CD8-positive, alpha-beta T cell (primary cell): ENCODE measurements at regions of chr9 and their contacts with region 1.

Region 1: GRCh38 chr9:71716138-71716909 is 52.0 kb downstream of the CEMIP2 start:
- DNase-seq: no peak
- ATAC-seq: no peak
- H3K4me3 ChIP-seq: no peak overlapping the region
- H3K4me3 Mint-ChIP-seq: no peak overlapping the region
- H3K27ac ChIP-seq: no peak overlapping the region
- H3K27ac Mint-ChIP-seq: no peak overlapping the region
- H3K4me1 ChIP-seq: no peaks in the 10 kb centered on the region
- H3K4me1 Mint-ChIP-seq: peaks cover 10% of the 10 kb centered on the region
- H3K27me3 ChIP-seq: no peaks in the 10 kb centered on the region
- H3K27me3 Mint-ChIP-seq: no peaks in the 10 kb centered on the region
- CTCF ChIP-seq: peak; percentile 77

Region 2: DNA sequence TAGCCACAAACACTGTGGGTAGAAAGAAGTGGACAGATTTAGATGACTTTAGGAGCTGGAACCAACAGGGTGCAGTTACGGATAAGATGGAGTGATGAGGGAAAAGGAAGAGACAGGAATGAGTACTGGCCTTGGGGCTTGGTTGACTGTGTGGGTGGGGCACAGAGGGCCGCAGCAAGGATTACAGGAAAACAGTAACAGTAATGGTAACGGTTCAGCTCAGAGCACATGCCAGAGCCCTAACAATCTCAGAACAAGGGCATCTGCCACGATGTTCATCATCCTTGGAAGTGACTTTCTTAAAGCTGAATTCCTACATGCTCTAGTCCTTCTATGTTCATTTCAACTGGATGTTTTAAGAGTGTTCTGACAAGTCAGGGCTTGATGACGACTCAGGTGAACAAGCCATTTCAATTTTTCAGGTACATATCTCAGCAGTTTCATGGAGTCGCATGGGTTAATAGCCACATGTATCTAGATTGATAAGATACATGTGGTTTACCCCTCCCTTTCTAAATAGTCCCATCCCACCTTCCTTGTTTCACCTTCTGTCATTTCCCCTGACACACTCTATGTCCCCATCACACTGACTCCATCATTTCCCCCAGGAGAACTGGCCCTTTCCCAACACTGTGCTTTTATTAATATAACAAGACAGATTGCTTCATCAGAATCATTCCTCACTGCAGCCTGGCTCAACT is 13.0 kb before region 1 on chr9:
- CTCF ChIA-PET with region 1: interaction called, 3 read pairs
- POLR2A ChIA-PET with region 1: no interaction called
- intact Hi-C with region 1: loop called in 1 of 2 experiments (anchors 2 kb)
- DNase-seq: no peak
- ATAC-seq: no peak
- H3K4me3 ChIP-seq: no peak overlapping the region
- H3K4me3 Mint-ChIP-seq: no peak overlapping the region
- H3K27ac ChIP-seq: no peak overlapping the region
- H3K27ac Mint-ChIP-seq: peak overlapping the region; percentile 30
- H3K4me1 ChIP-seq: no peaks in the 10 kb centered on the region
- H3K4me1 Mint-ChIP-seq: peaks cover 2% of the 10 kb centered on the region
- H3K27me3 ChIP-seq: no peaks in the 10 kb centered on the region
- H3K27me3 Mint-ChIP-seq: no peaks in the 10 kb centered on the region
- CTCF ChIP-seq: no peak

Region 3: DNA sequence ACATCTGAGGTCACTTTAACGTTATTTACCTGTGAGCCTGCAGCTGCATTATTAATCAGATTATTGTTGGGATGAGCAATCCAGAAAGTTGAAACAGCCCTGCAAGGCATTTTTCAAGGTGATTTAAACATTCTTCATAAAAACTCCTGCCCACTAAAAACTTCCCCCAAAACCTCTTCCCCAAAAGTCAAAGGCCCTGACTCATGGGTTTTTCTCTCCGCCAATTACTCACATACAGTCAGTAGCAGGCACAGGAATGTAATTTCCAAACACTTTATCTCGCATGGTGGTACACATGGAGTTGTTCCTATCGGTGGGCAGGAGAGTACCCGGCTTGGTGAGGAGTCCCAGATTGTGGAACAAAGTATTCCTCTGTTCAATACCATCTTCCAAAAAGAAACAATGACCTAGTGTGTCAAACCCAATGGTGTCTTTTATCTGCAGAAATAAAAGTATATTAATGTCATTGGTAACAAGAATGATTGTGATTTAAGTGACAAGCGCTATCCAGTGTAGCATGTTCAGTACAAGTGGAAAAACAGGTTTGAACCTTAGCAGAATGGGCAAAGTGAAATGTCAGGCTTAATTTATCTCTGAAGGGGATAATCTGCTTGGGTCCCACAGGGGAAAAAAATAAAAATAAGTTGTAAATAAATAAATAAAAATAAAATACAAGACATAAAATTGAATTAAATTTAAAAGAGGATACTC is 13.6 kb after region 1 on chr9:
- CTCF ChIA-PET with region 1: interaction called, 4 read pairs
- POLR2A ChIA-PET with region 1: interaction called, 3 read pairs
- intact Hi-C with region 1: loop called in 1 of 2 experiments (anchors 2 kb)
- DNase-seq: no peak
- ATAC-seq: no peak
- H3K4me3 ChIP-seq: no peak overlapping the region
- H3K4me3 Mint-ChIP-seq: no peak overlapping the region
- H3K27ac ChIP-seq: no peak overlapping the region
- H3K27ac Mint-ChIP-seq: no peak overlapping the region
- H3K4me1 ChIP-seq: no peaks in the 10 kb centered on the region
- H3K4me1 Mint-ChIP-seq: peaks cover 1% of the 10 kb centered on the region
- H3K27me3 ChIP-seq: no peaks in the 10 kb centered on the region
- H3K27me3 Mint-ChIP-seq: no peaks in the 10 kb centered on the region
- CTCF ChIP-seq: no peak